ENCODE measurements at regions of chr5 and their contacts with region 1.

Region 1: GRCh38 chr5:34656001-34656699 is at the start of gene RAI14:
- DNase-seq: peak; percentile 75 to 97
- H3K4me3 ChIP-seq: peak within 1 kb of the TSS; percentile 82
- H3K27ac ChIP-seq: peak within 1 kb of the TSS; percentile 87
- H3K4me1 ChIP-seq: peaks cover 46% of the 10 kb centered on the region
- H3K27me3 ChIP-seq: no peaks in the 10 kb centered on the region
- CTCF ChIP-seq: no peak
- total RNA-seq, gene RAI14: 133 and 145 TPM in 2 replicates

Region 2: DNA sequence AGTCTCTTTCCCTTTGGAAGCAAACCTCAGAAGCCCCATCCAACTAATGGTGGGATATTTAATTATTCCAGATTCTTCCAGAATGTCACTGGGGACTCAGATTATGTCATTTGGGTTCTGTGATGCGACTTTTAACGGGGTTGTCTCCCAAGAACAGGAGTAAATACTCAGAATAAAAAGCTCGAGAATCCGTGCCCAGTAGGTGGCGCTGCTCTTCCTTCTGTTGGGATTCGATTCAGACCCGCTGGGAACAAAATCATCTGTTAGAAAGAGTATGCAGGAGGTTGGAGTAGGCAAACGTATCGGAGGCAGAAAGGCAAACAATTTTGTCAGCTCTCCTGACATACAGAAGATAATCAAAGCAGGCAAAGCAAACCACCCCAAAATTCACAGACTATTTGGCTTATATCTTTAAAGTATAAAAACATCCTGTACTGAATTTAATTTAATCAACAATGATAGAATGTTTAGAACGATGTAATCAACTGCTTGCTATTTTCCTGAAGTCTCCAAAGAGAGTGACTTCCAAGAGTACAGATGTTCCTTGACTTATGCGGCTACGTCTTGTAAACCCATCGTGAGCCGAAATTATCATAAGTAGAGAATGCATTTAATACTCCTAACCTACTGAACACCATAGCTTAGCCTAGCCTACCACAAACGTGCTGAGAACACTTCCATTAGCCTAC is 169.8 kb before region 1 on chr5:
- CTCF ChIA-PET with region 1: no interaction called
- POLR2A ChIA-PET with region 1: interaction called, 4 read pairs
- intact Hi-C with region 1: loop called (anchors 1 kb)
- DNase-seq: peak; percentile 78 to 89
- H3K4me3 ChIP-seq: no peak overlapping the region
- H3K27ac ChIP-seq: peak overlapping the region; percentile 95
- H3K4me1 ChIP-seq: peaks cover 46% of the 10 kb centered on the region
- H3K27me3 ChIP-seq: no peaks in the 10 kb centered on the region
- CTCF ChIP-seq: peak; percentile 99

Region 3: DNA sequence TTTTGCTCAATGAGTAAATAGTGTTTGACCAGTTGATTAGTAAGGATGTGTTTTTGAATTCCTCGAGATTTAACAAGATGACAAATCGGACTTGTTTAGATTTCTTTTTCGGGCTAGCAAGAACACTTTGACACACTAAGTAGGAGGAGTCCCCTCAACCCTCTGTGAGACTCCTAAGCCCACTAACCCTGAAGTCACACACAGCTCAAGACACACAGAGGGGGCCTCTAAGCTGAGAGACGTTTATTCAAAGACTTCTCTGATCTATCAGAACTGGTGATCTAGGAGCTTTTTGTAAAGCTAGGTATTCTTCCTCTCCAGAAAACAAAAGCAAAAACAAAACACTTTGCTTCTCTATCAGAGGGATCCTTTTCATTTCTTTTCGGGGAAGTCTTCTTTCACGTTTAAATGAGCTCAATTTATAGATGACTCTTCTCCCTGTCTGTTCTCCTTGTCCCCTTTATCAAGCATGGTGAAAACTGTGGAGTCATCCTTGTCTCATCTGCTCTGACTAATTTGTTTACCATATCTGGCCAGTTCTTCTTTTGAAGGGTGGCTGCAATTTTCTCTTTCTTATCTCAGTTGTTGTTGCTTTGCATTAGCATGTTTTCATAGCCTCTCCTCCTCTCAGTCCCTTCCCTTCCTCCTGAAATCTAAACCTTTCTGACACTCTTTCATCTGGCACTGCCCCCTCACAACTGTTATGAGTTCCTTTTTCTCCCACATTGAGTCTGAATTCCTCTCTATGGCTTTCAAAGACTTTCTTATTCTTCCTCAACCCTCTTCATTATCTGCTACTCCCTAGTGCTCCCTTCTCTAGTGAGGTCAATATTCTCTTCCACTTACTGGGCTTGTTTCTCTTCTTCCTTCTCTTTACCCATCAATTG is 68.6 kb before region 1 on chr5:
- CTCF ChIA-PET with region 1: interaction called, 11 read pairs
- POLR2A ChIA-PET with region 1: interaction called, 19 read pairs
- intact Hi-C with region 1: loop called (anchors 1 kb)
- DNase-seq: peak in 1 of 2 experiments; percentile 86
- H3K4me3 ChIP-seq: peak overlapping the region; percentile 51
- H3K27ac ChIP-seq: peak overlapping the region; percentile 97
- H3K4me1 ChIP-seq: peaks cover 76% of the 10 kb centered on the region
- H3K27me3 ChIP-seq: no peaks in the 10 kb centered on the region
- CTCF ChIP-seq: no peak

Region 4: DNA sequence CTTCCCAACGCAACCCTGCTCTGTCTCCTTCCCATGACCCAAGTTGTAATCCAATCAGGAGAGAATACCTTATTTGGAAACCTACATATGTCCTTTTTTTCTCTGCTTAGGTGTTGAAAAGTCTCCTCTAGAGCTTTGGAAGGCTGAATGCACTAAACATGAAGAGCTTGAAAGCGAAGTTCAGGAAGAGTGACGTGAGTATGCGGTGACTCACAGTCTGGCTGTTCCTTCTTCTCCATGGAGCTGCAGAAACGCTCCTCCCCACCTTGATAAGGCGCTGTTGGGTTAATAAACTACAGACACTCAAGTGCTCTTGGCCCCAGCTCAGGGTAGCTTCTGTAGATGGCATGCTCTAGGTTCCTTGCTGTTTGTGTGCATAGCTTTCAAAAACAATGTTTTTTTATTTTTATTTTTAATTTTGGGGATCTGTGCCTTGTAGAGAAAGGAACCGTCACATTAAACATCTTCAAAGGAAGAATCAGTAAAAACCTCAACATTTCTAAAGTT is 30.7 kb after region 1 on chr5:
- CTCF ChIA-PET with region 1: no interaction called
- POLR2A ChIA-PET with region 1: interaction called, 7 read pairs
- intact Hi-C with region 1: loop called (anchors 1 kb)
- DNase-seq: peak; percentile 88 to 90
- H3K4me3 ChIP-seq: no peak overlapping the region
- H3K27ac ChIP-seq: peak overlapping the region; percentile 34
- H3K4me1 ChIP-seq: peaks cover 58% of the 10 kb centered on the region
- H3K27me3 ChIP-seq: no peaks in the 10 kb centered on the region
- CTCF ChIP-seq: no peak

Region 5: DNA sequence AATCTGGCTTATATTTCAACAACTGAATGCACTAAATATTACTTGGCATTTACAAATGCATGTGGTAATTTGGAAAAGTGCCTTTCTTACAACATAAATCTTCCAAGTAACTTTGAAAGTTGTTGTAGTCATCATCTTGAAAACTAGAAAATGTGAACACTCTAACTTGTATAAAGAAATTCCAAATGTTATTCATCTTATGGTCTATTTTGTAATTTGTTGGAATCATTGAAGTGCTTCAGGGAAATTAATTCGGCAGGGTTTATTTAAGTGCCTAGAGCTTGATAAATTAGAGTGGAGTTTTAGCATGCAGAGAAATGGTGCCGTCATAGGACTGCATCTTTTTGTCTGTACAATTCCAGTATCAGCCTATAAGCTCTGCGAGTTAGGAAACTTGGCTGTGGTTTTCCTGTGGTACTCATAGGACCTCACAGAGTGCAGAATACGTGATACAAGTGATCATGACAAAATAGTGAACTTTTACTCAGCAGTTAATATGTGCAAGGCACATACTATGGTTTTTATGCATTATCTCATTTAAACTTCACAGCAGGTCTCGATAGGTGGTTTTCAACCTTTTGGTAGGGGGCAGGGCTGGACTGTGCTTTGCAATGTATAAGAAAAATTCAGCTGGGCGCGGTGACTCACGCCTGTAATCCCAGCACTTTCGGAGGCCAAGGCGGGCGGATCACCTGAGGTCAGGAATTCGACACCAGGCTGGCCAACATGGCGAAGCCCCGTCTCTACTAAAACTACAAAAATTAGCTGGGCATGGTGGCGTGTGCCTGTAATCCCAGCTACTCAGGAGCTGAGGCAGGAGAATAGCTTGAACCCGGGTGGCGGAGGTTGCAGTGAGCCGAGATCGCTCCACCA is 79.6 kb after region 1 on chr5:
- CTCF ChIA-PET with region 1: no interaction called
- POLR2A ChIA-PET with region 1: no interaction called
- intact Hi-C with region 1: loop called (anchors 2 kb)
- DNase-seq: peak; percentile 50 to 67
- H3K4me3 ChIP-seq: no peak overlapping the region
- H3K27ac ChIP-seq: peak overlapping the region; percentile 20
- H3K4me1 ChIP-seq: peaks cover 14% of the 10 kb centered on the region
- H3K27me3 ChIP-seq: no peaks in the 10 kb centered on the region
- CTCF ChIP-seq: no peak

Region 6: DNA sequence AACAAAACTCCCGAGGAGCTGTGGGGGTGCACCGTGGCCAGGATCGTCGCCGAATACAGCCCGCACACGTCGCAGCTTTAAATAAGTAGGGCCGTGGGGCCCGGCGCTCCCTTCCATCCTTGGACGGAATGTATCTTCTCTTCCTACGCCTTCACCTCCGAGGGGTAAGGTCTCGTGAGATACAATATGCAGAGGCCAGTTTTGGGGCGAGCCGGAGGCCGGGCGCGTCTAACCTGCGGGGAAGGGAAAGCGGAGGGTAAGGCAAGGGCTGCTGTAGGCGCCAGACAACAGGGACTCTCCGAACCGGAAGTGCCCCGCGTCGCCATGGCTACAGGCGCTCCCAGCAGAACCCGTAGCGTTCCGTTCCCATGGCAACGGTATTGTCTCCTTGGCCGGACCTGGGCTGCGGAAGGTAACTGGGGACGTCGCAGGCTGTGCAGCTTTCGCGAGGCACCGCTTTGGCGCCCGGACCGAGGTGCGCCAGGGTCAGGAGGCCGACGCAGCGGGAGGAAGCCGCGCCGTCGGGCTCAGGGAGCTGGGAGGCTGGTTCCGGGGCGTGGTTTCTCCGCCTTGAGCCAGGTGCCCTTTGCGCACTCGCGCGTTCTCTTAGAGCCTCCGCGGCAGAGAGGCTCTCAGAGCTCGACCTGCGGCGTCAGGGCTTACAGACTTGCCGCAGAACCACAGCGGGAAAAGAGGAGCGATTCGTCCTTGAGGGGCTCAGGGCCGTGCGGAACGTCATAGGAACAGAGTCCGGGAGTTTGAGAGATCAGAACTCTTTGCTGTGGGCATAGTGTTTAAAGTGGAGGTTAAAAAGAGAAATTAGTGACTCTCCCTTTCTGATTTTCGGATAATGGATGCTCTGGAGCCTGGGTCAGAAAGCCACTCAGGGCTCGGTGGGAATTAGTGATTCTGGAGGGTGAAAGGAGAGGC is 182.9 kb after region 1 on chr5 and contains the start of gene TTC23L:
- CTCF ChIA-PET with region 1: no interaction called
- POLR2A ChIA-PET with region 1: no interaction called
- intact Hi-C with region 1: loop called (anchors 1 kb)
- DNase-seq: peak; percentile 86 to 98
- H3K4me3 ChIP-seq: peak within 1 kb of the TSS; percentile 68
- H3K27ac ChIP-seq: peak within 1 kb of the TSS; percentile 21; the same call in 1 of the 2 replicates
- H3K4me1 ChIP-seq: peaks cover 6% of the 10 kb centered on the region
- H3K27me3 ChIP-seq: no peaks in the 10 kb centered on the region
- CTCF ChIP-seq: no peak
- total RNA-seq, gene TTC23L: 3.9 and 7.1 TPM in 2 replicates